CD4-positive, alpha-beta memory T cell (primary cell): ENCODE measurements at regions of chr12 and their contacts with region 1.

Region 1: GRCh38 chr12:106955377-106956047 is at the start of gene TMEM263:
- DNase-seq: peak; percentile 89 to 91 (median 90)
- H3K4me3 ChIP-seq: peak within 1 kb of the TSS; percentile 74 to 92
- H3K4me3 Mint-ChIP-seq: peak within 1 kb of the TSS; percentile 92 to 98 (median 96)
- H3K27ac ChIP-seq: peak within 1 kb of the TSS; percentile 76
- H3K27ac Mint-ChIP-seq: peak within 1 kb of the TSS; percentile 93 to 99 (median 96)
- H3K4me1 ChIP-seq: peaks cover 17% of the 10 kb centered on the region
- H3K4me1 Mint-ChIP-seq: peaks cover 20 to 48% (median 25%) of the 10 kb centered on the region in 4 donors
- H3K27me3 ChIP-seq: no peaks in the 10 kb centered on the region
- H3K27me3 Mint-ChIP-seq: no peaks in the 10 kb centered on the region
- total RNA-seq, gene TMEM263: 31.2 to 32.9 TPM

Region 2: GRCh38 chr12:106247674-106248311 is 707.7 kb before region 1 on chr12 and contains the start of gene CKAP4:
- CTCF ChIA-PET with region 1: no interaction called
- POLR2A ChIA-PET with region 1: no interaction called
- intact Hi-C with region 1: loop called (anchors 10 kb)
- DNase-seq: peak; percentile 56 to 65 (median 64)
- H3K4me3 ChIP-seq: peak within 1 kb of the TSS; percentile 32 to 54
- H3K4me3 Mint-ChIP-seq: peak within 1 kb of the TSS; percentile 83 to 90 (median 87)
- H3K27ac ChIP-seq: peak within 1 kb of the TSS; percentile 74
- H3K27ac Mint-ChIP-seq: peak within 1 kb of the TSS; percentile 80 to 98 (median 96)
- H3K4me1 ChIP-seq: peaks cover 34% of the 10 kb centered on the region
- H3K4me1 Mint-ChIP-seq: peaks cover 9 to 43% (median 30%) of the 10 kb centered on the region in 4 donors
- H3K27me3 ChIP-seq: no peaks in the 10 kb centered on the region
- H3K27me3 Mint-ChIP-seq: no peaks in the 10 kb centered on the region
- total RNA-seq, gene CKAP4: 12.5 to 13.0 TPM

Region 3: DNA sequence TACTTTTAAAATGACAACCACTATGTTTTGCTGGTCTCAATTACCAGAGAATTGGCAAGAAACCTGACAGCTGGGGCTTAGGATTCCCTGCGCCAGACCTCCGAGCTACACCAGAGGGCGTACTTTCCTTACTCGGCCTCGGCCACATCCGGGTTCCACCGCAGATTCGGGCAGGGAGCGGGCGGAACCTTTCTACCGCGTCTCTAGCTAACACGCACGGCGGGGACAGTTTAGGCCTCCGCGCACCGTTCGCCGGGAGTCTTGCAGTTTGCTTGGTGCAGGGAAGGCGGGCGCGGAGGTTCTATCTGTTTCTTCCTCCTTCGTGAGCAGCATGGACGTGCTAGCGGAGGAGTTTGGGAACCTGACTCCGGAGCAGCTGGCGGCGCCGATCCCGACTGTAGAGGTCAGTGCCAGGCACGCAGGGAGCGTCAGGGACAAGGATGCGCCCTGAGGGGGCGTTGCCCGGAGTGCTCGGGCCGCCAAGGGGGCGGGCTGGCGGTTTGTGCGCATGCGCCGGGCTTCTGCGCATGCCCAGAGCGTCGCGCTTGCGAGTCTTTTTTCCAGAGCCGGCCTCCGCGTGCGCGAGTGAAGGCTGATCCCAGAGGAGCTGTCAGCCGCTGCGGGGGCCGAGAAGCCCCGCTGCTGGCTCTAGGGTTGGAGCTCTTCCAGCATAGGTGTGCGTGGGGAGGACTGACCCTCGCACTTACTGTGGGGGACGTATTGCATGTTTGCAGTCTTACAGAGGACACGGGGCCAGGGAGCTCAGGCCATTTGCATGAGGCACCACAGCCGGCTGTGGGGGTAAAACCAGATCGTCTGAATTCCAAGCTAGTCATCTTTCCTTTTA is 597.7 kb before region 1 on chr12 and contains the start of gene POLR3B:
- CTCF ChIA-PET with region 1: interaction called, 13 read pairs
- POLR2A ChIA-PET with region 1: interaction called, 13 read pairs
- intact Hi-C with region 1: no loop called
- DNase-seq: peak; percentile 96 to 98 (median 97)
- H3K4me3 ChIP-seq: peak within 1 kb of the TSS; percentile 77 to 87
- H3K4me3 Mint-ChIP-seq: peak within 1 kb of the TSS; percentile 86 to 95 (median 94)
- H3K27ac ChIP-seq: peak within 1 kb of the TSS; percentile 68
- H3K27ac Mint-ChIP-seq: peak within 1 kb of the TSS; percentile 92 to 97 (median 95)
- H3K4me1 ChIP-seq: peaks cover 20% of the 10 kb centered on the region
- H3K4me1 Mint-ChIP-seq: peaks cover 10 to 20% (median 16%) of the 10 kb centered on the region in 4 donors
- H3K27me3 ChIP-seq: no peaks in the 10 kb centered on the region
- H3K27me3 Mint-ChIP-seq: no peaks in the 10 kb centered on the region
- total RNA-seq, gene POLR3B: 6.6 to 7.5 TPM

Region 4: GRCh38 chr12:106986625-106987430 is 31.3 kb after region 1 on chr12 and contains the start of gene MTERF2:
- CTCF ChIA-PET with region 1: interaction called, 3 read pairs
- POLR2A ChIA-PET with region 1: interaction called, 24 read pairs
- intact Hi-C with region 1: loop called (anchors 1 kb)
- DNase-seq: peak; percentile 68 to 83 (median 72)
- H3K4me3 ChIP-seq: peak within 1 kb of the TSS; percentile 63 to 77
- H3K4me3 Mint-ChIP-seq: peak within 1 kb of the TSS; percentile 95 to 97 (median 96)
- H3K27ac ChIP-seq: peak within 1 kb of the TSS; percentile 87
- H3K27ac Mint-ChIP-seq: peak within 1 kb of the TSS; percentile 86 to 96 (median 94)
- H3K4me1 ChIP-seq: peaks cover 29% of the 10 kb centered on the region
- H3K4me1 Mint-ChIP-seq: peaks cover 30 to 49% (median 36%) of the 10 kb centered on the region in 4 donors
- H3K27me3 ChIP-seq: no peaks in the 10 kb centered on the region
- H3K27me3 Mint-ChIP-seq: no peaks in the 10 kb centered on the region
- total RNA-seq, gene MTERF2: 12.0 TPM

Region 5: DNA sequence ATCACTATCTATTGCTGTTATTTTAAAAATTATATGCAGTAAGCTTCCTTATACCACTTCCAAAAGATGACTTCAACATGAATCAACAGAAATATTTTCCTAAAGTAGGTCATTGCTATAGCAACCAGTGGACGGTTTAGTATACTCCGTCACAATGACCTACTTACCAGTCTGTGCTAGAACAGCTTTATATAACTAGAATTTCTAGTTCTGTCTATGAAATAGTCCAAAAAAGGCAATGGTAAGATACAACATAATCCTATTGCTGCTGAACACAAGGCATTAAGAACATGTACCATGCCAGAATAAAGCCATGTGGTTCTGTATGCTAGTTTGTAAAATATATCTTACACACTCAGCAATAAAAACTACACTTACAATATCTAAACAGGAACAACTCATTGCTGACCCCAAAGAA is 72.1 kb after region 1 on chr12:
- CTCF ChIA-PET with region 1: no interaction called
- POLR2A ChIA-PET with region 1: interaction called, 11 read pairs
- intact Hi-C with region 1: loop called (anchors 5 kb)
- DNase-seq: peak; percentile 66 to 90 (median 82)
- H3K4me3 ChIP-seq: no peak overlapping the region
- H3K4me3 Mint-ChIP-seq: peak overlapping the region; percentile 26 to 85 (median 74)
- H3K27ac ChIP-seq: peak overlapping the region; percentile 91
- H3K27ac Mint-ChIP-seq: peak overlapping the region; percentile 95 to 100 (median 99)
- H3K4me1 ChIP-seq: peaks cover 75% of the 10 kb centered on the region
- H3K4me1 Mint-ChIP-seq: peaks cover 49 to 82% (median 68%) of the 10 kb centered on the region in 4 donors
- H3K27me3 ChIP-seq: no peaks in the 10 kb centered on the region
- H3K27me3 Mint-ChIP-seq: no peaks in the 10 kb centered on the region

Region 6: GRCh38 chr12:107225635-107226034 is 270.1 kb after region 1 on chr12:
- CTCF ChIA-PET with region 1: no interaction called
- POLR2A ChIA-PET with region 1: no interaction called
- intact Hi-C with region 1: no loop called
- DNase-seq: no peak
- H3K4me3 ChIP-seq: no peak overlapping the region
- H3K4me3 Mint-ChIP-seq: no peak overlapping the region
- H3K27ac ChIP-seq: no peak overlapping the region
- H3K27ac Mint-ChIP-seq: no peak overlapping the region
- H3K4me1 ChIP-seq: no peaks in the 10 kb centered on the region
- H3K4me1 Mint-ChIP-seq: no peaks in the 10 kb centered on the region
- H3K27me3 ChIP-seq: no peaks in the 10 kb centered on the region
- H3K27me3 Mint-ChIP-seq: peaks cover 6 to 19% of the 10 kb centered on the region in 2 donors